CD8-positive, alpha-beta T cell (primary cell): ENCODE measurements at regions of chr2 and their contacts with region 1.

Region 1: GRCh38 chr2:219160186-219161017 is at the start of gene NHEJ1:
- DNase-seq: peak; percentile 83 to 97 (median 92)
- ATAC-seq: peak; percentile 88
- H3K4me3 ChIP-seq: peak within 1 kb of the TSS; percentile 59 to 77
- H3K4me3 Mint-ChIP-seq: peak within 1 kb of the TSS; percentile 93
- H3K27ac ChIP-seq: peak within 1 kb of the TSS; percentile 60 to 69
- H3K27ac Mint-ChIP-seq: peak within 1 kb of the TSS; percentile 95
- H3K4me1 ChIP-seq: peaks cover 11% of the 10 kb centered on the region
- H3K4me1 Mint-ChIP-seq: peaks cover 16% of the 10 kb centered on the region
- H3K27me3 ChIP-seq: no peaks in the 10 kb centered on the region
- H3K27me3 Mint-ChIP-seq: no peaks in the 10 kb centered on the region
- CTCF ChIP-seq: peak; percentile 97
- total RNA-seq, gene NHEJ1: 7.2 to 8.1 TPM

Region 2: GRCh38 chr2:218979846-218980734 is 180.3 kb before region 1 on chr2:
- CTCF ChIA-PET with region 1: interaction called, 11 read pairs
- POLR2A ChIA-PET with region 1: no interaction called
- intact Hi-C with region 1: no loop called
- DNase-seq: peak; percentile 72 to 88 (median 83)
- ATAC-seq: peak; percentile 89
- H3K4me3 ChIP-seq: peak overlapping the region; percentile 3 to 18
- H3K4me3 Mint-ChIP-seq: peak overlapping the region; percentile 76
- H3K27ac ChIP-seq: no peak overlapping the region
- H3K27ac Mint-ChIP-seq: no peak overlapping the region
- H3K4me1 ChIP-seq: peaks cover 31% of the 10 kb centered on the region
- H3K4me1 Mint-ChIP-seq: peaks cover 34% of the 10 kb centered on the region
- H3K27me3 ChIP-seq: peaks cover 49% of the 10 kb centered on the region in 2 experiments
- H3K27me3 Mint-ChIP-seq: peaks cover 64% of the 10 kb centered on the region
- CTCF ChIP-seq: peak; percentile 94

Region 3: DNA sequence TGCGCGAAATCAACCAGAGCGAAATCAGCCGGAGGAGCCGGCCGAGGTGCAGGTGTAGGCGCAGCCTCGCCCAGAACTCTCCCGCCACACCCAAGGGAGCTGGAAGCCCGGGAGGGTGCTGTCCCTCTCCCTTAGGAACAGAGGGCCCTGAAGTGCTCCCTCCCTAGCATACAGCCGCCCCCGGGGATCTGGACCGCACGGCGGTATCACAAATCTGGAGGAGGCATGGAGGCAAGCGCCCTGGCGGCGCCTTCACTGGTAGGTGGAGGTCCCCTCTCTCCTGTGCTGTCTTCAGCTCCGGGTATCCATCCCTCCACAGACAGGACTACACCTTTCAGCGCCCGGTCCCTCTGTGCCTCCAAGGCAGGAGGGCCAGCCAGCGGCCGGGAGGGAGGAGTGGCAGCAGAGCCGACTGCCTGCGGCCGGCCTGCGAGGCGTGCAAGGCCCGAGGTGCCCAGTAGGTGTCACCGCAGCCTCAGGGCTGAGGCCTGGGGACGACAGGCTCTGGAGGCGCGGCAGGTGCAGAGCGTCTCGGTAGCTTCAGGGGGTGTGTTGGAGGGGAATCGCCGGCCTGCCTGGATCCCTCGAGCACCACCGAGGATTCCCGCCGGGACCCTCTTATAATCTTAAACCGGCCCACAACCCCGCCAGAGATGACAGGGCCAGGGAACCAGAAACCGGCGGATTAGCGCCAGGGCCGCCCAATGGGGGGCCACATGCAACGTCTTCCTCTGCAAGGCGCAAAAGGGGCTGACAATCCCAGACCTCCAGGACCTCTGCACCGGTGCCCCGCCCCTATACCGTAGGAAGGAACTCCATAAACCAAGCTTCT is 102.5 kb before region 1 on chr2:
- CTCF ChIA-PET with region 1: interaction called, 98 read pairs
- POLR2A ChIA-PET with region 1: no interaction called
- intact Hi-C with region 1: loop called (anchors 1 kb)
- DNase-seq: peak; percentile 62 to 85 (median 74)
- ATAC-seq: peak; percentile 96
- H3K4me3 ChIP-seq: no peak overlapping the region
- H3K4me3 Mint-ChIP-seq: peak overlapping the region; percentile 55
- H3K27ac ChIP-seq: no peak overlapping the region
- H3K27ac Mint-ChIP-seq: no peak overlapping the region
- H3K4me1 ChIP-seq: peaks cover 35% of the 10 kb centered on the region
- H3K4me1 Mint-ChIP-seq: peaks cover 26% of the 10 kb centered on the region
- H3K27me3 ChIP-seq: peaks cover 26 to 37% of the 10 kb centered on the region in 2 experiments
- H3K27me3 Mint-ChIP-seq: peaks cover 58% of the 10 kb centered on the region
- CTCF ChIP-seq: peak; percentile 92

Region 4: GRCh38 chr2:219206442-219207253 is 46.2 kb after region 1 on chr2 and contains the start of gene ZFAND2B:
- CTCF ChIA-PET with region 1: interaction called, 228 read pairs
- POLR2A ChIA-PET with region 1: interaction called, 10 read pairs
- intact Hi-C with region 1: loop called (anchors 1 kb)
- DNase-seq: peak; percentile 91 to 99 (median 96)
- ATAC-seq: peak; percentile 88
- H3K4me3 ChIP-seq: peak within 1 kb of the TSS; percentile 63 to 68
- H3K4me3 Mint-ChIP-seq: peak within 1 kb of the TSS; percentile 95
- H3K27ac ChIP-seq: peak within 1 kb of the TSS; percentile 87 to 88
- H3K27ac Mint-ChIP-seq: peak within 1 kb of the TSS; percentile 99
- H3K4me1 ChIP-seq: peaks cover 48% of the 10 kb centered on the region
- H3K4me1 Mint-ChIP-seq: peaks cover 46% of the 10 kb centered on the region
- H3K27me3 ChIP-seq: no peaks in the 10 kb centered on the region
- H3K27me3 Mint-ChIP-seq: no peaks in the 10 kb centered on the region
- CTCF ChIP-seq: no peak
- total RNA-seq, gene ZFAND2B: 74.3 to 78.7 TPM

Region 5: GRCh38 chr2:219229305-219230058 is 69.1 kb after region 1 on chr2 and contains the starts of genes ANKZF1 and ATG9A:
- CTCF ChIA-PET with region 1: interaction called, 3 read pairs
- POLR2A ChIA-PET with region 1: interaction called, 5 read pairs
- intact Hi-C with region 1: loop called in 1 of 2 experiments (anchors 1 kb)
- DNase-seq: peak; percentile 95 to 99 (median 98)
- ATAC-seq: peak; percentile 96
- H3K4me3 ChIP-seq: peak within 1 kb of the TSS; percentile 83 to 93
- H3K4me3 Mint-ChIP-seq: peak within 1 kb of the TSS; percentile 99
- H3K27ac ChIP-seq: peak within 1 kb of the TSS; percentile 79 to 95
- H3K27ac Mint-ChIP-seq: peak within 1 kb of the TSS; percentile 98
- H3K4me1 ChIP-seq: peaks cover 39% of the 10 kb centered on the region
- H3K4me1 Mint-ChIP-seq: peaks cover 58% of the 10 kb centered on the region
- H3K27me3 ChIP-seq: no peaks in the 10 kb centered on the region
- H3K27me3 Mint-ChIP-seq: no peaks in the 10 kb centered on the region
- CTCF ChIP-seq: no peak
- total RNA-seq, gene ANKZF1: 97.4 to 99.5 TPM
- total RNA-seq, gene ATG9A: 103 to 116 TPM

Region 6: GRCh38 chr2:219278655-219279516 is 118.5 kb after region 1 on chr2 and contains the start of gene DNAJB2:
- CTCF ChIA-PET with region 1: interaction called, 11 read pairs
- POLR2A ChIA-PET with region 1: interaction called, 4 read pairs
- intact Hi-C with region 1: loop called (anchors 1 kb)
- DNase-seq: peak; percentile 97 to 100 (median 99)
- ATAC-seq: peak; percentile 74
- H3K4me3 ChIP-seq: peak within 1 kb of the TSS; percentile 56 to 76
- H3K4me3 Mint-ChIP-seq: peak within 1 kb of the TSS; percentile 90
- H3K27ac ChIP-seq: peak within 1 kb of the TSS; percentile 98 to 99
- H3K27ac Mint-ChIP-seq: peak within 1 kb of the TSS; percentile 99
- H3K4me1 ChIP-seq: peaks cover 31% of the 10 kb centered on the region
- H3K4me1 Mint-ChIP-seq: peaks cover 38% of the 10 kb centered on the region
- H3K27me3 ChIP-seq: no peaks in the 10 kb centered on the region
- H3K27me3 Mint-ChIP-seq: no peaks in the 10 kb centered on the region
- CTCF ChIP-seq: no peak
- total RNA-seq, gene DNAJB2: 108 to 123 TPM